OCI-LY7 (cell line): ENCODE measurements at regions of chr3 and their contacts with region 1.

Region 1: DNA sequence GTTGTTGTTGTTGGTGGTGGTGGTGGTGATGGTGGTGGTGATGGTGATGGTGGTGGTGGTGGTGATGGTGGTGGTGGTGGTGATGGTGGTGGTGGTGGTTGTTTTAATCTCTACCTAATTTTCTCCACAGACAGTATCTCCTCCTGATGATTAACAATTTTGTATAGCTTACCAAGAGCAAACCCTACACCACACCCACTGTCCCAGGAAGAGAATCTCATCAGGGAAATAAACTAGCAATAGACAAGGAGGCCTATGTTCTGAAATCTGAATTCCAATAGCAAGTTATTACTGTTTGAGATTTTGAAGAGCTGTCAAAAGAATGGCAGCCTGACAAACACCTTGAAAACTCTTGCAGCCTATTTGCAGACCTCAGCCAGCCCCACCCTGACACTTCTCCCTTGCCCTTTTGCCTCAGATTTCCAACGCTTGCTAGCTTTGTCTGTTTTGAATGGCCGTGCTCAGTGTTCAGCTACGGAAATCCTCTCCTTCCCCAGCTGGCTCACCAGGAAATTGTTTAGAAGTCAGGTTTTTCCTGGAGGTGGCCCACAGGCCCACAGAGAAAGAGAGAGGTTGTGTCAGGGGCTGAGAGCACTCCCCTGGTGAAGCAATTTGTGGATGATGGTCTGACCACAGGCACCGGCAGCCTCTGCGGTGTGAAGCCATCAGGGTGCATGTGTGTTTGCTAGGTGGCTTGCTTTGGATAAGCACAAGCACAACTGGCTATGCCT is 101.6 kb downstream of the MAGI1 start:
- DNase-seq: no peak
- H3K4me3 ChIP-seq: no peak overlapping the region
- H3K27ac ChIP-seq: no peak overlapping the region
- H3K4me1 ChIP-seq: no peaks in the 10 kb centered on the region
- CTCF ChIP-seq: no peak

Region 2: DNA sequence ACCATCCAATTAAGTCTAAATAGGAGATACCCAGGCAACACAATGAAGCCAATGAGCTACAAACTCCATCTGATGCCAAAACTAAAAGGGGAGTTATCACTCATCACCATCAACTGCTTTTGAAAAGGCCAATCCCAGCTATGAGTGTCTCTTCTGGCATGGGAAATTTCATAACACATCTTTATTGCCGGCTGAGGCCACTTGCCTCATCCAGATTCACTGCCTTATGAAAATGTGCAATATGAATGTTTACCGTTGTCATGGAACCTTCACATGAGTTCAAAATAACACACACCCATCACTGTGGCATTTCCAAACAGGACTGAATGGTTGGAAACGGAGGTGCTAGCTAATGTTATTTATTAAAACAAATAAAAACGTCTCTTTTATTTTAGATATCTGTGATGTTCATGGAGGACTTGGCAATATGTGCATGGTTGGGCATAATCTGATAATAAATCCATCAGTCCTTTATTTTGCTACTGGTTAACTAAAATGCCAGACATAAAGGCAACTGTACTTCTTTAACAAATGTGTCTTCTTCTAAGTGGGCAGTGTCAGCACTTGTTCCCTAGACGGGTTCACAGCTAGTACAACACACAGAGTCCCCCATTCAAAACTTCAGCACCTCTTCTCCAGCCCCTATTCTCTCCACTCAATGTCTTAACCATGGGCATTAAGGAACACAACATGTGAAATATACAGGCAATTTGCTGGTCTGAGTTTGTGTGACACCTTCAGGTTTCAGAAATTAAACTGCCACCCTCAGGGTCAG is 42.2 kb before region 1 on chr3:
- CTCF ChIA-PET with region 1: no interaction called
- POLR2A ChIA-PET with region 1: no interaction called
- intact Hi-C with region 1: no loop called
- DNase-seq: no peak
- H3K4me3 ChIP-seq: no peak overlapping the region
- H3K27ac ChIP-seq: no peak overlapping the region
- H3K4me1 ChIP-seq: no peaks in the 10 kb centered on the region
- CTCF ChIP-seq: no peak

Region 3: DNA sequence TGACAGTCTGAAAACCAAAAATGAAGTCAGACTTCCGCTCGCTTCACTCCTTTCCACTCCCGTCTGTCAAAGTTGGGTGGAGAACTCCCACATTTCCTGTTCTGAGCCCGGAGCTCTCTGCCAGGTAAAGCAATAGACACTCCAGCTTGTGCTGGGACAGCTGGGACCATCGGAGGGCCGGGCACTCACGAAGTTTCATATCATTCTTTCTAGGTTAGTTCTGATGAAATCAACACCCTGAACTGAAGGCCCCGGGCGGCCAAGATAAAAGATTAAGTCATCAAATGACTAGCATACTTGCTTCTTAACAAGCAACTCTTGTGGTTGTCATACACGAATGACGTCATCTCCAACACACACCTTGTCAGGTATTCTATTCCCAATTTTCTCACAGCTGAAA is 59.5 kb after region 1 on chr3:
- CTCF ChIA-PET with region 1: no interaction called
- POLR2A ChIA-PET with region 1: no interaction called
- intact Hi-C with region 1: loop called (anchors 10 kb)
- DNase-seq: no peak
- H3K4me3 ChIP-seq: no peak overlapping the region
- H3K27ac ChIP-seq: no peak overlapping the region
- H3K4me1 ChIP-seq: no peaks in the 10 kb centered on the region
- CTCF ChIP-seq: no peak

Region 4: DNA sequence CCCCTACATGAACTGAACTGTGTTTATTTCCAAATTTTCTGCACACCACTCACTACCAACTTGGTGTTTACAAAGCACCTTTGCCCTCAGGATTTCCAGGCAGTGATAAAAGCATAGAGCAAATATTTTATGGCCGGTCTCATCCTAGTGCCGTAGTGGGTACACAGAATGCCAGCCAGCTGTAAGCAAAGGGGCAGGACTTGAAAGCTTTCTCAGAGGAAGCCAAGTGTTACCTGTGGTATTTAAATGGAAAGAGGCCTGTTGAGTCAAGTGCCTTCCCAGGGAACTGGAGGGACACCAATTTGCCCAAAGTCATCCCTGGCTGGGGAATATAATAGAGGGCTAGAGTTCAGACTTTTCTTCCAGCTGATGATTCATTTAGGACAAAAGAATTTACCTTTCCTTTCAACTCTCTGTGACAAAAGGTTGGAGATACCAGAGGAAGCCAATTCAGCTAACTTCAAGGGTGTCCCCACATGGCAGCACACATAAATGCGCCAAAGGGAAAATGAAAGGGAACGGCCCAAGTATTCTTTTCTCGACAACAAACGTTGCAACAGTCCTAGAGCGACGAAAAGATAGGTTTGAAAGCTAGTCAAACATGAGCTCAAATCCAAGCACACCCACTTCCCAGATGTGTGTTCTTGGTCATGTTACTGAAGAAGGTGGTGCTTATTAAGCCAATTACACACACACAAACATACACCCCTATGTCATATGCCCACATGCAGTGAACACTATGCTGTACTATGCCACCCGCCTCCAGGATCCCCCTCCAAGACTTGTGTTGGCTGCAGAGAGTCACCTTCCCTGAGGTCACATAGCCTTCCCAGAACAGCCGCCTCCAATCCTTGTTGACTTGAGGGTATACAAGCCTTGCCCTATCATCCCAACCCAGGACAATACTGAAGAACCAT is 73.9 kb after region 1 on chr3:
- CTCF ChIA-PET with region 1: no interaction called
- POLR2A ChIA-PET with region 1: no interaction called
- intact Hi-C with region 1: no loop called
- DNase-seq: no peak
- H3K4me3 ChIP-seq: no peak overlapping the region
- H3K27ac ChIP-seq: no peak overlapping the region
- H3K4me1 ChIP-seq: no peaks in the 10 kb centered on the region
- CTCF ChIP-seq: no peak